ENCODE measurements at regions of chr20 and their contacts with region 1.

Region 1: GRCh38 chr20:49338061-49338460 is 60.2 kb upstream of the ZNFX1 start:
- DNase-seq: no peak
- H3K4me3 Mint-ChIP-seq: no peak overlapping the region
- H3K27ac Mint-ChIP-seq: no peak overlapping the region
- H3K4me1 Mint-ChIP-seq: no peaks in the 10 kb centered on the region
- H3K27me3 Mint-ChIP-seq: peaks cover 10% of the 10 kb centered on the region

Region 2: DNA sequence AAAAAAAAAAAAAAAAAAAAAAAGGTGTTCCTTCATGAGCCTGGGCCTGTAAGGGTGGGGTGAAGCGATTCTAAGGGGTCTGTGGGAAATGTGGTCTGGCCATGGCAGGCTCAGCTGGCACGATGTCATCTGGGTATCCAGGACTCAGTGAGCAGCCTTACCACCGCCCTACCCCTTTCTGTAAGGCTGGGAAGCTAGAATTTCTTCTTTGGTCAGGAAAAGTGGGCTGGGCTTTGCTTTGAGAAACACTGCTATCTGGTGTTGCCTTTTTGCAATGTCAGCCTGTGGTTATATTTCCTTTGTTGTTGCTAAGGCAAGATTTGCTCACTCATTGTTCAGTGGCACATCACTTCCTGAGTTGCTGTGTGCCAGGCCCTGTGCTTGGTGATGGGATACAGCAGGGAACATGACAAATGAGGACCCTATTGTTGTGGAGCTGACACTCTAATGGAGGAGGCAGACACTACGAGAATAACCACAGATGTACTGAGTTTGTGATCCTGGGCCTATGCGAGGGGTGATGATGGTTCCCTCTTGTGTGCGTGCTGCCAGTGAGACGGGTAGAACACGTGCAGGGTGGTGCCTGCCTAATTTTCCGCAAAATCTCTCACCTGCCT is 14.3 kb before region 1 on chr20:
- CTCF ChIA-PET with region 1: interaction called, 12 read pairs
- POLR2A ChIA-PET with region 1: no interaction called
- intact Hi-C with region 1: no loop called
- DNase-seq: peak; percentile 48
- H3K4me3 Mint-ChIP-seq: peak overlapping the region; percentile 24
- H3K27ac Mint-ChIP-seq: peak overlapping the region; percentile 69
- H3K4me1 Mint-ChIP-seq: peaks cover 26% of the 10 kb centered on the region
- H3K27me3 Mint-ChIP-seq: peaks cover 26% of the 10 kb centered on the region

Region 3: DNA sequence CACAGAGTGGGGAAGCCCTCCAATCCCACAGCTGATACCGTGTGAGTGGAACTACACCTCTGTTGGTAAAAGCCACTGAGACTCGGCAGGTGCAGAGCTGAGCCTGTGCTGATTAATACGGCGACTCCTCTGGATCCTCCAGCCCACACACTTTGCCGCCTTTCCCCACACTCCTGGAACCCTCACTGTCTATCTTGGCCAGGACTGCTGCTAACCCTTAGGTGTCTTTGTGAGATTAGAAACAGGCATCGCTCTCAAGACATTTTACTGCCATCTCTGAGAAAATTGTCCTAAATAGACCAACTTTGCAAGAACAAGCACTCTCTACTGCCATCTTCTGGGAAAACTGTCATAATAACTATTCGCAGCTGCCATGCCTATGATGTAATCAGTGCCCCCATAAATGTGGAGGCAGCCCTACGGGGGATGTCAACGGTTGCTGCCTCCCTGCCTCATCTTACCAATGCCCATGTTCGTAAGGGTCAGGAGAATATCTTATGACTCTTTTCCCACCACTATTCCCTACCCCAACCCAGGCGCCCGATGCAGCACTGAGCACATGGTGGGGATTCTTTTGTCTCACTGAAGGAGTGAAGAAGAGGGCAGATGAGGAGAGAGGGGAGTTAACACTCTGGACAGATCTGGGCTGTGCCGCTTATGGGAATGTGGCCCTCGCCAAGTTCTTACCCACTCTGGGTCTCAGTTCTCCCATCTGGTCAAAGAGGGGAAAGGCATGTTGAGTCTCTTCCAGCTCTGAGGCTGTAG is 170.6 kb after region 1 on chr20:
- CTCF ChIA-PET with region 1: interaction called, 29 read pairs
- POLR2A ChIA-PET with region 1: no interaction called
- intact Hi-C with region 1: loop called (anchors 1 kb)
- DNase-seq: no peak
- H3K4me3 Mint-ChIP-seq: no peak overlapping the region
- H3K27ac Mint-ChIP-seq: no peak overlapping the region
- H3K4me1 Mint-ChIP-seq: peaks cover 3% of the 10 kb centered on the region
- H3K27me3 Mint-ChIP-seq: peaks cover 46% of the 10 kb centered on the region

Region 4: GRCh38 chr20:49534255-49534712 is 196.2 kb after region 1 on chr20:
- CTCF ChIA-PET with region 1: interaction called, 75 read pairs
- POLR2A ChIA-PET with region 1: no interaction called
- intact Hi-C with region 1: loop called (anchors 1 kb)
- DNase-seq: peak; percentile 74
- H3K4me3 Mint-ChIP-seq: no peak overlapping the region
- H3K27ac Mint-ChIP-seq: peak overlapping the region; percentile 69
- H3K4me1 Mint-ChIP-seq: peaks cover 21% of the 10 kb centered on the region
- H3K27me3 Mint-ChIP-seq: peaks cover 9% of the 10 kb centered on the region

Measured in activated CD4-positive, alpha-beta memory T cell treated with anti-CD3 and anti-CD28 coated beads for 36 hours (primary cell).